ENCODE measurements at regions of chr9 and their contacts with region 1.

Region 1: GRCh38 chr9:127095411-127095810 is 27.0 kb downstream of the ANGPTL2 start:
- DNase-seq: no peak
- H3K4me3 ChIP-seq: no peak overlapping the region
- H3K27ac ChIP-seq: peak overlapping the region in 54 of 59 donors; percentile 8 to 87 (median 68)
- H3K27me3 ChIP-seq: no peaks in the 10 kb centered on the region
- CTCF ChIP-seq: no peak

Region 2: GRCh38 chr9:127133739-127134167 is 38.3 kb after region 1 on chr9:
- intact Hi-C with region 1: loop called in 1 of 2 experiments (anchors 2 kb)
- DNase-seq: peak; percentile 45 to 91 (median 86)
- H3K4me3 ChIP-seq: peak overlapping the region in 21 of 59 donors; percentile 1 to 45 (median 22)
- H3K27ac ChIP-seq: peak overlapping the region; percentile 86 to 99 (median 97)
- H3K27me3 ChIP-seq: no peaks in the 10 kb centered on the region
- CTCF ChIP-seq: peak in 5 of 56 donors; percentile 9 to 18 (median 16)